ENCODE measurements at regions of chr6 and their contacts with region 1.

Region 1: GRCh38 chr6:16514249-16514648 is 247.0 kb downstream of the ATXN1 start:
- DNase-seq: peak; percentile 51
- ATAC-seq: peak; percentile 62
- H3K4me3 Mint-ChIP-seq: no peak overlapping the region
- H3K27ac Mint-ChIP-seq: no peak overlapping the region
- H3K4me1 Mint-ChIP-seq: peaks cover 69% of the 10 kb centered on the region
- H3K27me3 Mint-ChIP-seq: no peaks in the 10 kb centered on the region

Region 2: DNA sequence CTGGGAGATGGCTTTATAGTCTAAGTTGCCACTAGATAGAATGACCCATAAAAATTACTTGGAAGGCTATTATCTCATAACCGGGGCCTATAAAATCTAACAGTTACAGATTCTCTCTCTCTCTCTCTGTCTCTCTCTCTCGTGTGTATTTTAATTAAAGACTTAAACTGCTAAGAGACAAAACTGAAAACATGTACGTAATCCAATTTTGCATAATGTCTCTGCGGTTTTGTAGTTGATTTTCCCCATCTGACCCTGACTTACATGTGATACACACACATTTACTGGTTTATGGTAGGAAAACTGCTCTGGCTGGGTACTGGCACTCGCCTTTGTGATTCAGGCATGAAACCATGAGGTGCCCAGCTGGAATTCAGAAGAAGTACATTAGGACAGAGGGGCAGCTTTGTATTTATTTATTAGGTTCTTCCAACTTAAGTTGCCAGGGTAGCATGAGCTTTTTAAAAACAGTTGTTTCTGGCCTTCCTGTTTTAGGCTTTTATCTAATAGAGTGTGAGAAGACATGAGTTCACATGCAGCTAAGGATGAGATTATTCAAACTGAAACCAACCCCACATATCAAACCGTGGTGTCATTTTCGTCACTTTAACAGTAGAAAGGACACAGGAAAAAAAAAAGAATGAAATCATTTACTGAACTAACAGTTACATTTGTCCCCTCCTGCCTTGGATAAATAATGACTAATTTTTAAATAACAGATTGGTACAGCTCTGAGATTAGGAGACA is 93.4 kb before region 1 on chr6:
- CTCF ChIA-PET with region 1: interaction called, 19 read pairs
- POLR2A ChIA-PET with region 1: interaction called, 3 read pairs
- DNase-seq: peak; percentile 46
- ATAC-seq: peak; percentile 90
- H3K4me3 Mint-ChIP-seq: peak overlapping the region; percentile 60
- H3K27ac Mint-ChIP-seq: peak overlapping the region; percentile 95
- H3K4me1 Mint-ChIP-seq: peaks cover 46% of the 10 kb centered on the region
- H3K27me3 Mint-ChIP-seq: no peaks in the 10 kb centered on the region

Region 3: GRCh38 chr6:16481697-16482399 is 32.4 kb before region 1 on chr6:
- CTCF ChIA-PET with region 1: interaction called, 93 read pairs
- POLR2A ChIA-PET with region 1: interaction called, 5 read pairs
- DNase-seq: peak; percentile 83
- ATAC-seq: peak; percentile 78
- H3K4me3 Mint-ChIP-seq: peak overlapping the region; percentile 26
- H3K27ac Mint-ChIP-seq: peak overlapping the region; percentile 93
- H3K4me1 Mint-ChIP-seq: peaks cover 80% of the 10 kb centered on the region
- H3K27me3 Mint-ChIP-seq: no peaks in the 10 kb centered on the region

Region 4: GRCh38 chr6:16544006-16544405 is 29.8 kb after region 1 on chr6:
- CTCF ChIA-PET with region 1: interaction called, 11 read pairs
- POLR2A ChIA-PET with region 1: no interaction called
- DNase-seq: no peak
- ATAC-seq: no peak
- H3K4me3 Mint-ChIP-seq: no peak overlapping the region
- H3K27ac Mint-ChIP-seq: no peak overlapping the region
- H3K4me1 Mint-ChIP-seq: peaks cover 9% of the 10 kb centered on the region
- H3K27me3 Mint-ChIP-seq: no peaks in the 10 kb centered on the region

Region 5: GRCh38 chr6:16761471-16762267 is 247.4 kb after region 1 on chr6:
- CTCF ChIA-PET with region 1: interaction called, 173 read pairs
- POLR2A ChIA-PET with region 1: interaction called, 15 read pairs
- DNase-seq: peak; percentile 90
- ATAC-seq: peak; percentile 64
- H3K4me3 Mint-ChIP-seq: peak overlapping the region; percentile 99
- H3K27ac Mint-ChIP-seq: peak overlapping the region; percentile 97
- H3K4me1 Mint-ChIP-seq: peaks cover 60% of the 10 kb centered on the region
- H3K27me3 Mint-ChIP-seq: no peaks in the 10 kb centered on the region

Region 6: DNA sequence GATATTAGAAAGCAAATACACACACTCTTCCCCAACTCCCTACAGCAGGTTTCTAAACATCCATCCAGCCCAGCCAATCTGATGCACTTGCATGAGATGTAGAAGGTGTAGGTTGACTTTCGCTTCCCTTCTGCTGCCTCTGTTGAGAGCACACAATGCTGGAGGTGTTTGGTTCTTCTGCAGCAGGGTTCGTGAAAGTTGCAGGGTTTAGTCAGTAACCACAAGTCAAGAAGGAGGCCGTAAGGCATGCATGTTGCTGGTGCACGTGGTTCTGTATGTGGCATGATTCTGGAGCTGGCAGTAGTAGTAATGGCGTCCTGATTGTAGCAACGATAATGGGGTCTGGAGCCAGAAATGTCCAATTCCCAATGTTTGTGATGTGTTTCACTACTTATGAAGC is 1697.1 kb after region 1 on chr6:
- CTCF ChIA-PET with region 1: no interaction called
- POLR2A ChIA-PET with region 1: no interaction called
- DNase-seq: peak; percentile 27
- ATAC-seq: peak; percentile 39
- H3K4me3 Mint-ChIP-seq: no peak overlapping the region
- H3K27ac Mint-ChIP-seq: no peak overlapping the region
- H3K4me1 Mint-ChIP-seq: peaks cover 15% of the 10 kb centered on the region
- H3K27me3 Mint-ChIP-seq: no peaks in the 10 kb centered on the region

Measured in activated CD8-positive, alpha-beta T cell treated with anti-CD3 and anti-CD28 coated beads, Interleukin-2, amount 10 ng/mL, durations not matched to agents 7 days and 5 days (primary cell).